PC-3 (cell line): ENCODE measurements at regions of chr1 and their contacts with region 1.

Region 1: GRCh38 chr1:225652729-225653462 is at the start of gene ENAH:
- DNase-seq: peak; percentile 88
- ATAC-seq: peak; percentile 58
- H3K4me3 ChIP-seq: peak within 1 kb of the TSS; percentile 98
- H3K27ac ChIP-seq: peak within 1 kb of the TSS; percentile 77
- H3K4me1 ChIP-seq: peaks cover 55% of the 10 kb centered on the region
- H3K27me3 ChIP-seq: no peaks in the 10 kb centered on the region
- CTCF ChIP-seq: no peak
- total RNA-seq, gene ENAH: 96.6 and 101 TPM in 2 replicates

Region 2: DNA sequence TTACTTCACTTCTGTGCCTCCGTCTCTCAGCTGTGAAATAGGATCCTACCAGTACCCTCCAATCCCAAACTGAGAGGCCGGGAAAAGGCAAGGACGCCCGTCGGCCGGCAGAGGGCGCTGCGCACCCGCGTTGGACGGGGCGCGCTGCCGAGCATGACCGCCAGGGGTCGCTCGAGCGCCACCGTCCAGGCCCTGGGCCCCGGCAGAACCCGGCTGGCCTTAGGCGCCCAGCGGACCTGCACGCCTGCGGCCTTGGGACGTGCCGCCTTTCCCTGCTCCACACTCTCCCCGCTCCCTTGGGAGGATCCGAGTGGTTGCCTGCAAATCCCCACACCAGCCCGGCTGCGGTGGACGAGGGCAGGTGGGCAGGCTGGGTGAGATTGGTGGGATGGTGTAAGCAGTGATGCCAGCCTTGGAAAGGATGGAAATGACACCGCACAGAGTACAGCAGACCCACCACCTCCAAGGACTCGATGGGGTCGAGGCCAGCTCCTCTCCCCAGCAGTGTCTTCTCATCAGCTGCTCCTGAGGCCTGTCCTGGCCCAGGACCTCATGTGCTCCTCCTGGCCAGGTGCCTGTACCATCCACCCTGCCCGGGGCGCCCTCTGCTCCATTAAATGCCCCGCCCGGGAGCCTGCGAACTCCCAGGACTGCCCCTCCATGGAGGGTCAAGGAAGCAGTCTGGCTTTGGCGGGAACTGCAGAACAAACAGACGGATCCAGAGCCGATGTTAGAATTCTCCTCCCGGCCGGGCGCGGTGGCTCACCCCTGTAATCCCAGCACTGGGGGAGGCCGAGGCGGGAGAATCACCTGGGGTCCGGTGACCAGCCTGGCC is 177.7 kb before region 1 on chr1:
- CTCF ChIA-PET with region 1: interaction called, 10 read pairs
- POLR2A ChIA-PET with region 1: no interaction called
- intact Hi-C with region 1: no loop called
- DNase-seq: peak; percentile 82
- ATAC-seq: peak; percentile 90
- H3K4me3 ChIP-seq: no peak overlapping the region; the same call in 1 of the 2 replicates
- H3K27ac ChIP-seq: no peak overlapping the region
- H3K4me1 ChIP-seq: peaks cover 10% of the 10 kb centered on the region; the same call in 1 of the 2 replicates
- H3K27me3 ChIP-seq: no peaks in the 10 kb centered on the region
- CTCF ChIP-seq: peak; percentile 100

Region 3: DNA sequence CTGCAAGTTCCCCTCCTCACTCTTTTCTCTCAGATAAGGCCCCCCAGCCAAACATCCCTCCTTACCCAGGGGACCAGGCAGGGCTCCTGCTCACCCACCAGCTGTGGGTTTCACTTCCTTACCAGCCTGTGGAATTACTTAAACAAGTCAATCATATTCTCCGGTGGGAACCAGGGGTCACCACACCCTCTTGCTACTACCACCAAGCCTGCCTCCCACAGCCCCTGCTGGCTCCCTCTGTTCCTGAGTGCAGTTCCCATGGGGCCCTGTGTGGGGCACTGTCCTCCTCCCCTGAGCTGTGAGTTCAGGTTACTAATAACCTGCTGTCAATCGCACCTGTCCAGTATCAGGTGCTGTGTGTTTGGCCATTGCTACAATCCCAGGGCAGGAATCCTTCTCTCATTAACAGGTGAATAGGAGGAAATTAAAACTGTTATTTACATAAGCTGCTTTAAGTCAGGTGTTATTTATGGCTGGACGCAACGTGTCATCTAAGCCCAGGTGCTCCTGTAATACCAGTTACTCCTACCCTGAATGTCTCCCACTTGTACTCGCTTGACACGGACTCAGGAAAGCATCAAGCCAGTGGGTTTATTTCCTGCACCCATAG is 172.0 kb before region 1 on chr1:
- CTCF ChIA-PET with region 1: no interaction called
- POLR2A ChIA-PET with region 1: interaction called, 4 read pairs
- intact Hi-C with region 1: loop called (anchors 1 kb)
- DNase-seq: peak; percentile 85
- ATAC-seq: peak; percentile 84
- H3K4me3 ChIP-seq: no peak overlapping the region
- H3K27ac ChIP-seq: no peak overlapping the region
- H3K4me1 ChIP-seq: no peaks in the 10 kb centered on the region
- H3K27me3 ChIP-seq: no peaks in the 10 kb centered on the region
- CTCF ChIP-seq: peak; percentile 99

Region 4: DNA sequence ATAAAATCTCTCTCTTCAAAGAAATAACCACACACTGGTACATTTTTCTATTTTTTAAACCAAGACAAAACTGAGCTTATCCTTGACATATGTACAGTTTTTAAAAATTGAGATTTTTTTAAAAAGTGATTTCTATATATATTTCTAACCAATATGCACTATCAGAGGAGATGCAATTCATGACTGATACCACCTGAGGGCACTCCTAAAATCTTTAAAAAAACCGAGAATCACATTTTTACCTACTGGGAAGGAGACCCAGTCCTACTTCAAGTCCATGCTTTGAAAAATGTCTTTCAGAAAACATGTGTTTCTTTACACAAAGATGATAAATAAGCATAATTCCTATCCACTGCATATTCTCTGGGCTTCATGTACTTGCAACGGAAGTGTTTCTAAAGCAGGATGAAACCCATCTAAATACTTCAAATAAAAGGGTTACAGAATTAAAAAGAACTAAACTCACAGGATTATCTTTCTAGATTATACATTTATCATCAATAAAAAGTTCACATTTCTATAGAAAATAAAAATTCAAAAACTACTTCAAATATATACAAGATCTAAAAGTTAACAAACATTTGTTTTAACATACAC is 98.6 kb before region 1 on chr1:
- CTCF ChIA-PET with region 1: no interaction called
- POLR2A ChIA-PET with region 1: no interaction called
- intact Hi-C with region 1: loop called (anchors 2 kb)
- DNase-seq: peak; percentile 79
- ATAC-seq: peak; percentile 61; the same call in 1 of the 2 replicates
- H3K4me3 ChIP-seq: no peak overlapping the region
- H3K27ac ChIP-seq: no peak overlapping the region
- H3K4me1 ChIP-seq: no peaks in the 10 kb centered on the region
- H3K27me3 ChIP-seq: no peaks in the 10 kb centered on the region
- CTCF ChIP-seq: peak; percentile 81

Region 5: DNA sequence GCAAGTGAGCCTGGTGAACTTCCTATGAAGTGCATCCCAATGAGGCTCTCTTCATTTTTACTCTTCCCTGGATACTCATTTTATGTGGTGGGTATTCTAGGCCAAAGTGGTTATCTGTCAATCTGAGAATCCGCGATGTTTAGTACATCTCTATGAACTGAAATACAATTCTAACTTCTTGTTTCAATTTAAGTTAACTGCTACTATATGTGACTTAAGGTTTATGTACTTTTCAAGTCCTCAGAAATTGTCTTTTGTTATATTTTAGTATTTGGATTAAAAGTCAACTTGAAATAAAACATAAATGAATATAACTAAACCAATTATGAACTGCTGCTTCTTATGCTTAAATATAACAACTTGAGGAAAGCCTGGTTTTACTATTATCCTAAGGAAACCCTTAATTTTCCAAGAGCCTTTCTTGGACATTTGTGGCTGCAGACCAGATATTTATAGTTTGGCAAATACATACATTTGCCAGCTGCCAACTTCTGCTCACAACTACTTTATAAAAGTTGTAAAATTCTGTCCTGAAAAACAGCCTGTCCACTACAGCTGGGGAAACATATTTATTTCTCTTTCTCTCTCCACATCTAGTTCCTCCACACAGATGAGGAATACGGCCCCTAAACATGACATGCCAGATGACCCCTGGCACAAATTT is 60.4 kb before region 1 on chr1:
- CTCF ChIA-PET with region 1: no interaction called
- POLR2A ChIA-PET with region 1: no interaction called
- intact Hi-C with region 1: no loop called
- DNase-seq: no peak
- ATAC-seq: no peak
- H3K4me3 ChIP-seq: no peak overlapping the region
- H3K27ac ChIP-seq: no peak overlapping the region
- H3K4me1 ChIP-seq: no peaks in the 10 kb centered on the region
- H3K27me3 ChIP-seq: no peaks in the 10 kb centered on the region
- CTCF ChIP-seq: no peak

Region 6: DNA sequence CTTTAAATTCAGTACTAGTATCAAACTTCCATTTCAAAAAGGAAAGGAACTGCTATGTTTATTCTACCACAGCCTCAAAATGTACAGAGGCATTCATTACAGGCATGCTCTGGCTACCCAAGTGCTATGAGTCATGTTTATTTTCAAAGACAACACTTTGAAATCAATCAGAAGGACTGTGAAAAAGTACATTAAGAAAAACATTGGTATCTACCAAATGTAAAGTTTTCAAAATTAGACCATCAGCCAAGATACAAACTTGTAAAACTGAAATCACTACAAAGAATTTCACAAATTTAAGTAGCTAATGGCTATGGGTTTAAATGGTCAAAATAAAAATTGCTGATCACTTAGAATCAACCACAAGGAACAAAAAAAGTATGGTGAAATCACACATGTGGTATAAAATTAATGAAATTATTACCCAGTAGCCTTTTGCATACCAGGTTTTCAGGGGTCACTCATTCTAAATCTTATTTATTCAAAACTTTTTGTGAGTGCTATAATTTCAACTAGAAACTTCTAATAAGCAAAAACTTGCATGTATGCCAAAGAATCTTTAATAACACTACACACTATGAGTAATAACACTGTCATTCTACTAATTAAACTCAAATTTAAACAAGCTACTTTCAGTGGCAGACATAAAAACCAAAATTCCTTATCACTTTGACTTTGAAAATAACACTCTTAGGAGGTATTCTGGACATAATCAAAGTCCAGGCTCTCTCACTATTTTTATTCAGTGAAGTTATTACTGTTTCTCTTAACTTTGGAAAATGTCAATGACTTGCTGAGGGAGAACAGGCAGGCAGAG is 49.1 kb before region 1 on chr1:
- CTCF ChIA-PET with region 1: no interaction called
- POLR2A ChIA-PET with region 1: interaction called, 4 read pairs
- intact Hi-C with region 1: loop called (anchors 1 kb)
- DNase-seq: peak; percentile 71
- ATAC-seq: peak; percentile 91
- H3K4me3 ChIP-seq: no peak overlapping the region
- H3K27ac ChIP-seq: peak overlapping the region; percentile 23
- H3K4me1 ChIP-seq: peaks cover 22% of the 10 kb centered on the region
- H3K27me3 ChIP-seq: no peaks in the 10 kb centered on the region
- CTCF ChIP-seq: no peak

Region 7: DNA sequence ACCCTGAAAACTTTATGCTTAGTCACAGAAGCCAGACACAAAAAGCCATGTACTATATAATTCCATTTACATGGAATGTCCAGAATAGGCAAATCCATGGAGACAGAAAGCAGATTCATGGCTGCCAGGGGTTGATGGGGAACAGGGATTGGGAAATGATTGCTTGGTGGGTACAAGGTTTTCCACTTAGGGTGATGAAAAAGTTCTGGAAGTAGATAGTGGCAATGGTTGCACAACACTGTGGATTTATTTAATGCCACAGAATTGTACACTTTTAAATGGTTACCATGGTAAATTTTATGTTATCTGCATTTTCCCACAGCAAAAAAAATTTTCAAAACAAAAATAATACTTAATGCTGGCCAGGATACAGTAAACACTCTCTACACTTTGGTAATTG is 40.6 kb before region 1 on chr1:
- CTCF ChIA-PET with region 1: no interaction called
- POLR2A ChIA-PET with region 1: interaction called, 10 read pairs
- intact Hi-C with region 1: no loop called
- DNase-seq: no peak
- ATAC-seq: no peak
- H3K4me3 ChIP-seq: no peak overlapping the region
- H3K27ac ChIP-seq: no peak overlapping the region
- H3K4me1 ChIP-seq: peaks cover 12% of the 10 kb centered on the region
- H3K27me3 ChIP-seq: no peaks in the 10 kb centered on the region
- CTCF ChIP-seq: no peak

Region 8: GRCh38 chr1:225700164-225700740 is 47.4 kb after region 1 on chr1:
- CTCF ChIA-PET with region 1: interaction called, 7 read pairs
- POLR2A ChIA-PET with region 1: interaction called, 13 read pairs
- intact Hi-C with region 1: loop called (anchors 1 kb)
- DNase-seq: peak; percentile 99
- ATAC-seq: peak; percentile 87
- H3K4me3 ChIP-seq: peak overlapping the region; percentile 48
- H3K27ac ChIP-seq: peak overlapping the region; percentile 80
- H3K4me1 ChIP-seq: peaks cover 37% of the 10 kb centered on the region
- H3K27me3 ChIP-seq: no peaks in the 10 kb centered on the region
- CTCF ChIP-seq: no peak

Region 9: DNA sequence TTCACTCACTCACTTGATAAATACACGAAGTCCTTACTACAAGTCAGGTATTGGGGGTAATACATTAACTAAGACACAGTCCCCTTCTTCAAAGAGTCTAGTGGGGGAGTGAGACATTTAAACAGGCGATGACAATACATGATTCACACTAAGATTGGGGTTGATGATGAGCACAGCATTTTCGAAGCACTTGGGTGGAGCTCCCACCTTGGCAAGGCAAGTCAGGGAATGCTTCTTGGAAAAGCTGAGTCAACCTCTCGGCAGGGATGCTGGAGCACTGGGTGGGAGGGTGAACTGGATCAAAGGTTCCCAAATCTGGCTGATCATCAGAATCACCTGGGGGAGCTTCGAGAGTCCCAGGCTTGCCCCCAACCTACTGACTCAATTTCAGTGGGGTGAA is 57.9 kb after region 1 on chr1:
- CTCF ChIA-PET with region 1: no interaction called
- POLR2A ChIA-PET with region 1: no interaction called
- intact Hi-C with region 1: no loop called
- DNase-seq: peak; percentile 93
- ATAC-seq: peak; percentile 94
- H3K4me3 ChIP-seq: no peak overlapping the region
- H3K27ac ChIP-seq: peak overlapping the region; percentile 46
- H3K4me1 ChIP-seq: peaks cover 27% of the 10 kb centered on the region
- H3K27me3 ChIP-seq: no peaks in the 10 kb centered on the region
- CTCF ChIP-seq: no peak